Activated CD4-positive, alpha-beta memory T cell treated with anti-CD3 and anti-CD28 coated beads for 36 hours (primary cell): ENCODE measurements at regions of chrX and their contacts with region 1.

Region 1: GRCh38 chrX:109732780-109733657 is at the start of gene ACSL4:
- DNase-seq: peak; percentile 87
- H3K4me3 Mint-ChIP-seq: peak within 1 kb of the TSS; percentile 99
- H3K27ac Mint-ChIP-seq: peak within 1 kb of the TSS; percentile 99
- H3K4me1 Mint-ChIP-seq: peaks cover 28% of the 10 kb centered on the region
- H3K27me3 Mint-ChIP-seq: no peaks in the 10 kb centered on the region
- total RNA-seq, gene ACSL4: 63.2 to 63.3 TPM

Region 2: GRCh38 chrX:109536439-109537336 is 196.3 kb before region 1 on chrX and contains the start of gene NXT2:
- CTCF ChIA-PET with region 1: no interaction called
- POLR2A ChIA-PET with region 1: no interaction called
- intact Hi-C with region 1: loop called (anchors 1 kb)
- DNase-seq: peak; percentile 90
- H3K4me3 Mint-ChIP-seq: peak within 1 kb of the TSS; percentile 90
- H3K27ac Mint-ChIP-seq: peak within 1 kb of the TSS; percentile 97
- H3K4me1 Mint-ChIP-seq: peaks cover 12% of the 10 kb centered on the region
- H3K27me3 Mint-ChIP-seq: peaks cover 6% of the 10 kb centered on the region
- total RNA-seq, gene NXT2: 12.6 to 13.9 TPM

Region 3: DNA sequence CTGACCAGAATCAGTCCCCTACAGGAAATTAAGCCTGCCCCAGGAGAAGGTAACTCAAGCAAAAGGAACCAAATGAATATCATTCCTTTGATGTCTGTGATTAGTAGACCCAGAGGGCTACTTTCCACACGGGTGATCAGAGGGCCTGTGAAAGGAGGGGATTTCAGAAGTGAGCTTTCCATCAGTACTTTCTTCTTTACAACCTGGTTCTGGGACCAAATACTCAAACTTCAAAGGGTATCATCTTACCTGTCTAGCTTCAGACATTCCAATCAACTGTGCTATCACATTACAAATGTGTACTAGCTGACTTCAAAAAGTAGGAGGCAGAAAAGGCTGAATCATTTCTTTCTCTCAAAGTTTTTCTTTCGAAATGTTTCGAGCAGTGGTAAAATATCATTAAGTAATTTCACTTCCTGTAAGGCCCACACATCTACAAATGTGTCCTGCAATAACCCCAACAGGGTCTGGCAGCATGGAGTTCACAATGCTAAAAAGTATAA is 23.8 kb before region 1 on chrX:
- CTCF ChIA-PET with region 1: interaction called, 10 read pairs
- POLR2A ChIA-PET with region 1: interaction called, 3 read pairs
- intact Hi-C with region 1: loop called (anchors 1 kb)
- DNase-seq: no peak
- H3K4me3 Mint-ChIP-seq: no peak overlapping the region
- H3K27ac Mint-ChIP-seq: peak overlapping the region; percentile 46
- H3K4me1 Mint-ChIP-seq: peaks cover 64% of the 10 kb centered on the region
- H3K27me3 Mint-ChIP-seq: no peaks in the 10 kb centered on the region

Region 4: GRCh38 chrX:109840585-109840984 is 107.6 kb after region 1 on chrX:
- CTCF ChIA-PET with region 1: interaction called, 5 read pairs
- POLR2A ChIA-PET with region 1: interaction called, 9 read pairs
- intact Hi-C with region 1: loop called (anchors 2 kb)
- DNase-seq: peak; percentile 18
- H3K4me3 Mint-ChIP-seq: no peak overlapping the region
- H3K27ac Mint-ChIP-seq: no peak overlapping the region
- H3K4me1 Mint-ChIP-seq: peaks cover 3% of the 10 kb centered on the region
- H3K27me3 Mint-ChIP-seq: no peaks in the 10 kb centered on the region

Region 5: GRCh38 chrX:110002300-110003166 is 269.5 kb after region 1 on chrX and contains the start of gene TMEM164:
- CTCF ChIA-PET with region 1: no interaction called
- POLR2A ChIA-PET with region 1: no interaction called
- intact Hi-C with region 1: loop called (anchors 10 kb)
- DNase-seq: peak; percentile 87
- H3K4me3 Mint-ChIP-seq: peak within 1 kb of the TSS; percentile 81
- H3K27ac Mint-ChIP-seq: peak within 1 kb of the TSS; percentile 76
- H3K4me1 Mint-ChIP-seq: peaks cover 34% of the 10 kb centered on the region
- H3K27me3 Mint-ChIP-seq: no peaks in the 10 kb centered on the region
- total RNA-seq, gene TMEM164: 10.1 to 13.2 TPM